WTC11 (cell line): ENCODE measurements at regions of chr4 and their contacts with region 1.

Region 1: GRCh38 chr4:83498187-83498586 is 13.3 kb upstream of the ABRAXAS1 start:
- DNase-seq: no peak
- ATAC-seq: no peak
- H3K4me3 Mint-ChIP-seq: no peak overlapping the region
- H3K27ac Mint-ChIP-seq: no peak overlapping the region
- H3K4me1 Mint-ChIP-seq: no peaks in the 10 kb centered on the region
- H3K27me3 Mint-ChIP-seq: no peaks in the 10 kb centered on the region; the same call in 1 of the 2 replicates
- CTCF ChIP-seq: no peak

Region 2: DNA sequence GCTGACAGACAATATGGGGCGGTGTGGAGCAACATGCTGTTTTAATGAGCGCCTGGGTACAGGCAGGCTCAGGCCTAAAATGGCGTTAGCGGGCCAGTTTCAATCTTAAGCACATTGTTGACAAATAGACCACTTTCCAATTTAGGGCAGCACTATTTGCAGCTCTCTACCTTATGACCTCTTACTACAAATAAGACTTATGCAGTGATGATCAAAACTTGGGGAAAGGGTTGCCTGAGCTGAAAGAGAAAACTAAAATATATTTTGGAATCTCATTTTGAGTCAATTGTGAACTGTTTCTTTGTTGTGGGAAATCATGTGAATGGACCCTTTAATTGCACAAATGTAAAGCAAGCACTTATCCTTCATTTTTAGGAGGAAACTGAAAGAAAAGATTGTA is 12.3 kb after region 1 on chr4:
- CTCF ChIA-PET with region 1: interaction called, 10 read pairs
- POLR2A ChIA-PET with region 1: no interaction called
- DNase-seq: no peak
- ATAC-seq: no peak
- H3K4me3 Mint-ChIP-seq: no peak overlapping the region
- H3K27ac Mint-ChIP-seq: no peak overlapping the region
- H3K4me1 Mint-ChIP-seq: no peaks in the 10 kb centered on the region
- H3K27me3 Mint-ChIP-seq: no peaks in the 10 kb centered on the region
- CTCF ChIP-seq: no peak

Region 3: DNA sequence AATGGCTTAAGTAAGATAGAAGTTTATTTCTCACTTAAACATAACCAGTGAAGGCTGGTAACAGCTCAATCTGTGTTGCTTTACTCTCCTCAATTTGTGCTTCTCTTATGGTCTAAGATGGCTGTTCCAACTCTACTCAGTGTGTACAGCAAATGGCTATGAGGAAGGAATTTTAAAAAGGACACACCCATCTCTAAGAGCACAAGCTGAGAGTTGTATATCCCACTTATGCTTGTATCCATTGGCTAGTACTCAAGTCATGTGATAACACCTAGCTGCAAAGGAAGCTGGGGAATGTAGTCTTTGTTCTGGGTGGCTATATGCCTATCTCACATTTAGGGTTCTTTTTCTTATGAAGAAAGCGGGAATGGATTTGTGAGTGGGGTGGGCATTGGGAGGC is 101.0 kb after region 1 on chr4:
- CTCF ChIA-PET with region 1: no interaction called
- POLR2A ChIA-PET with region 1: no interaction called
- DNase-seq: no peak
- ATAC-seq: peak; percentile 85
- H3K4me3 Mint-ChIP-seq: no peak overlapping the region
- H3K27ac Mint-ChIP-seq: no peak overlapping the region
- H3K4me1 Mint-ChIP-seq: no peaks in the 10 kb centered on the region
- H3K27me3 Mint-ChIP-seq: no peaks in the 10 kb centered on the region
- CTCF ChIP-seq: no peak